ENCODE measurements at regions of chr19 and their contacts with region 1.

Region 1: DNA sequence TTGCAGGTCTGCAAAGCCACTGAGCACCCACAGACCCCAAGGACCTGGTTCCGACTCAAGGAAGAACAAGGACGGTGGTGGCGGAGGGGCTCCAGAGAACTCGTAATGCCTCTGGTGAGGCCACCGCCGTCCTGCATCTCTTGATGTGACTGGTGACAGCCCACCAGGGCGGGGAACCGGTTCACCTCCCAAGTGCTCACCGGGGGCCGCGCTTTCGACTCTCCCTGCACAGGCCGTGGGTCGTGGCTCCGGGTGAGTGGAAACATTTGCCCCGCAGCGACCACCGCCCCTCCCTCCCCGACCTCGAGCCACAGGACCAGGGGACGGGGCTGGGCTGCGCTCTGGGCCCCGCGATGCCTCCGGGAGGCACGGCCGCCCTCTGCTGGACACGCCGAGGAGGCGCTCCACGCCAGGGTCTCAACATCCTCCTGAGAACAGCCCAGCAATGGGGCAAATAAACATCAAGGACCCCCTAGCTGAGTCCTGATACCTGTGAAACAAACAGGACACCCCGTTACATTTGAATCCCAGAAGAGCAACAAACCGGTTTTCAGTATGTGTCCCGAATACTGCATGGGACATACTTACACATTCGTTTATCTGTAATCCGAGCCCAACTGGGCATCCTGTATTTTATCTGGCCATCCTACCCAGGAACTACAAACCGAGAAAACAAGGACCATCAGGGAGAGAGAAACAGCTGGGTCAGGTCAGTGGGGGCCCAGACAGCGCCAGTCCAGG is 3.9 kb upstream of the PLPP2 start:
- DNase-seq: peak in 4 of 10 donors; percentile 32 to 66 (median 37)
- H3K4me3 ChIP-seq: peak overlapping the region; percentile 3 to 63 (median 38)
- H3K27ac ChIP-seq: peak overlapping the region in 18 of 59 donors; percentile 0 to 68 (median 39)
- H3K27me3 ChIP-seq: peaks cover 0 to 43% (median 22%) of the 10 kb centered on the region in 45 donors
- CTCF ChIP-seq: peak in 55 of 56 donors; percentile 37 to 84 (median 70)

Region 2: GRCh38 chr19:262125-262524 is 33.0 kb before region 1 on chr19:
- intact Hi-C with region 1: loop called in 1 of 2 experiments (anchors 2 kb)
- DNase-seq: no peak
- H3K4me3 ChIP-seq: no peak overlapping the region
- H3K27ac ChIP-seq: no peak overlapping the region
- H3K27me3 ChIP-seq: peaks cover 0 to 4% (median 0%) of the 10 kb centered on the region in 45 donors
- CTCF ChIP-seq: no peak

Region 3: GRCh38 chr19:344625-345319 is 49.7 kb after region 1 on chr19 and contains the start of gene MIER2:
- intact Hi-C with region 1: loop called in 1 of 2 experiments (anchors 5 kb)
- DNase-seq: peak; percentile 78 to 97 (median 82)
- H3K4me3 ChIP-seq: peak within 1 kb of the TSS; percentile 62 to 94 (median 78)
- H3K27ac ChIP-seq: peak within 1 kb of the TSS in 45 of 59 donors; percentile 14 to 89 (median 67)
- H3K27me3 ChIP-seq: no peaks in the 10 kb centered on the region
- CTCF ChIP-seq: peak in 2 of 56 donors; percentile 15 to 27
- total RNA-seq, gene MIER2: 14.9 to 45.6 (median 27.8) TPM

Region 4: GRCh38 chr19:488505-489417 is 193.6 kb after region 1 on chr19:
- intact Hi-C with region 1: loop called (anchors 5 to 10 kb)
- DNase-seq: peak; percentile 90 to 97 (median 94)
- H3K4me3 ChIP-seq: peak overlapping the region; percentile 45 to 97 (median 88)
- H3K27ac ChIP-seq: peak overlapping the region; percentile 79 to 100 (median 98)
- H3K27me3 ChIP-seq: peaks cover 0 to 4% (median 0%) of the 10 kb centered on the region in 45 donors
- CTCF ChIP-seq: peak in 42 of 56 donors; percentile 6 to 61 (median 36)